Prostate gland (tissue), 2 donors: ENCODE measurements at regions of chr5 and their contacts with region 1.

Region 1: DNA sequence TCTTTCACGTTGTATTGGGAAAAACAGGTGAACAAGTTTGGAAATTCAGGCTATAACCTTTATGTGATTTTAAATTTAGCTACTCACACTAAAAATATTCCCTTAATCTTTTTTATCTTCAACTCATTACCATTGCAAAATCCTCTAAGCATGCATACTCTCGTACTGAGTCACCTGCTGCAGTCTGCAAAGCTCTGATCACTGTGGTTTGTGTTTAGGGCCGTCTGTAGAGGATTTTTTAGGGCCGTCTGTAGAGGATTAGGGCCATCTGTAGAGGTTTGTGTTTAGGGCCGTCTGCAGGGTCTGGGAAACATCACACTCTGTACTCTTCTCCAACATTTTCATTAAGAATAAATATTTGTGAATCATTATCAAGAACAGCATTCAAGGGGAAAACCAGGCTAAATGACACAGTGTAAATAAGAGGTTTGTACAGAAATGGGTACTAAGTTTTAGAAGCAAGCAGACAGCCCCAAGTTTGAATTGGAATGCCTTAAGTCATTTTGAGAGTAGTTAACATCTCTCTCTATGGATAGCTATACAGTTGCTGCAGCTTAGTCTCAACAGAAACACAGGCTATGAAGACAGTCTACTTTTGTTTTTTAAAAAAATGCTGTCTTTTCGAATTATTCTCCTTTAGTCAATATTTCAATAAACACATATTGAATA is 155.0 kb upstream of the TSLP start:
- DNase-seq: no peak
- H3K4me3 ChIP-seq: no peak overlapping the region
- H3K27ac ChIP-seq: no peak overlapping the region
- H3K4me1 ChIP-seq: no peaks in the 10 kb centered on the region
- H3K27me3 ChIP-seq: no peaks in the 10 kb centered on the region
- CTCF ChIP-seq: no peak
- POLR2A ChIP-seq: no peak

Region 2: GRCh38 chr5:110790673-110791072 is 125.8 kb before region 1 on chr5:
- intact Hi-C with region 1: loop called (anchors 10 kb)
- DNase-seq: no peak
- H3K4me3 ChIP-seq: no peak overlapping the region
- H3K27ac ChIP-seq: no peak overlapping the region
- H3K4me1 ChIP-seq: no peaks in the 10 kb centered on the region
- H3K27me3 ChIP-seq: no peaks in the 10 kb centered on the region
- CTCF ChIP-seq: peak in 1 of 4 experiments; percentile 7
- POLR2A ChIP-seq: no peak

Region 3: GRCh38 chr5:111116550-111116949 is 200.0 kb after region 1 on chr5:
- intact Hi-C with region 1: no loop called
- DNase-seq: no peak
- H3K4me3 ChIP-seq: no peak overlapping the region
- H3K27ac ChIP-seq: no peak overlapping the region
- H3K4me1 ChIP-seq: no peaks in the 10 kb centered on the region
- H3K27me3 ChIP-seq: no peaks in the 10 kb centered on the region
- CTCF ChIP-seq: no peak
- POLR2A ChIP-seq: no peak

Region 4: GRCh38 chr5:111502956-111503355 is 586.4 kb after region 1 on chr5:
- intact Hi-C with region 1: no loop called
- DNase-seq: no peak
- H3K4me3 ChIP-seq: no peak overlapping the region
- H3K27ac ChIP-seq: peak overlapping the region; percentile 50 to 60
- H3K4me1 ChIP-seq: no peaks in the 10 kb centered on the region
- H3K27me3 ChIP-seq: no peaks in the 10 kb centered on the region
- CTCF ChIP-seq: no peak
- POLR2A ChIP-seq: no peak